BJ (cell line): ENCODE measurements at regions of chr7 and their contacts with region 1.

Region 1: DNA sequence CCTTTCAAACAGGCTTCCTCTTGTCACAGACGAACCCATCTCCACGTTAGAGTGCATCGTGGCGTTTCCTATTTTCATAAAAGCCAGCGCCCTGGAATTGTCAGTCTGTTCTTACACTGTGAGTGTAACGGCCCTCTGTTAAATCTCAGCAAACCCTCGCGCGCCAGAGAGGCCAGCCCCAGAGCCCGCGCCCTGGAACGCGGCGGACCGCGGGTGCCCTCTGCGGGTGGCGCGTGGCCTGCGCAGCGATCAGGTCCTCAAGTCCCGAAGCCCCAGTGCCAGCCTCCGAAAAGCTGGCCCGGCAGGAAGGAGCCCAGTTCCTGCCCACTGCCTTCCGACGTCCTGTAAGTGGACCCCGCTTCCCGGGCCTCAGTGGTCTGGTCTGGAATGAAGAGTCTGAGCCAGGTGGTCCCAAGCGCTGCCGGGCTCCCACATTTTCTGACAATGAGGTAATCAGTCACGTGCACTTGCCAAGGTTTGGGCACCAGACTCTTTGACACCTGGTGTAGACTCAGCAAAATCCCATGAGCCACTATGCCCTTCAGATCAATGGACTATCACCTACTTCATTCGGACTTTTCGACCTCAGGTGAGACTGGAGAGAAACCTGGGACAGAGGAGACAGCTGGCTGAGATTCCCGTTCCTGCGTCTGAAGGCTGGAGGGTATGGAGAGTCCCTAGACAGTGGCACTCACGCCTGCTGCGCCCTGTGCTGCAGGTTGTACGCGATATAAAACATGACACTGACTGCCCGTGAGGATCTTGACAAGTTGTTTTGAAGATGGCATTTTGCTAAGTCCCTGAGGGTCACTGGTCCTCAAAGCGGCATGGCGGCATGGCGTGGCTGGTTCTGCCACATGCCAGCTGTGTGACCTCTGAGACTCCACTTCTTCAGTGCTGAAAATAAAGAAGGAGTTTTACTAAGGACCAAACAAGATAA is 109.4 kb upstream of the LANCL2 start:
- DNase-seq: no peak
- H3K4me3 ChIP-seq: peak overlapping the region; percentile 52
- H3K27me3 ChIP-seq: no peaks in the 10 kb centered on the region
- CTCF ChIP-seq: peak; percentile 84

Region 2: GRCh38 chr7:53794816-53795215 is 1461.0 kb before region 1 on chr7:
- CTCF ChIA-PET with region 1: no interaction called
- POLR2A ChIA-PET with region 1: no interaction called
- DNase-seq: no peak
- H3K4me3 ChIP-seq: no peak overlapping the region
- H3K27me3 ChIP-seq: no peaks in the 10 kb centered on the region
- CTCF ChIP-seq: no peak

Region 3: GRCh38 chr7:54773472-54774399 is 482.0 kb before region 1 on chr7:
- CTCF ChIA-PET with region 1: interaction called, 398 read pairs
- POLR2A ChIA-PET with region 1: no interaction called
- DNase-seq: peak; percentile 26
- H3K4me3 ChIP-seq: peak overlapping the region; percentile 34
- H3K27me3 ChIP-seq: no peaks in the 10 kb centered on the region
- CTCF ChIP-seq: peak; percentile 83

Region 4: DNA sequence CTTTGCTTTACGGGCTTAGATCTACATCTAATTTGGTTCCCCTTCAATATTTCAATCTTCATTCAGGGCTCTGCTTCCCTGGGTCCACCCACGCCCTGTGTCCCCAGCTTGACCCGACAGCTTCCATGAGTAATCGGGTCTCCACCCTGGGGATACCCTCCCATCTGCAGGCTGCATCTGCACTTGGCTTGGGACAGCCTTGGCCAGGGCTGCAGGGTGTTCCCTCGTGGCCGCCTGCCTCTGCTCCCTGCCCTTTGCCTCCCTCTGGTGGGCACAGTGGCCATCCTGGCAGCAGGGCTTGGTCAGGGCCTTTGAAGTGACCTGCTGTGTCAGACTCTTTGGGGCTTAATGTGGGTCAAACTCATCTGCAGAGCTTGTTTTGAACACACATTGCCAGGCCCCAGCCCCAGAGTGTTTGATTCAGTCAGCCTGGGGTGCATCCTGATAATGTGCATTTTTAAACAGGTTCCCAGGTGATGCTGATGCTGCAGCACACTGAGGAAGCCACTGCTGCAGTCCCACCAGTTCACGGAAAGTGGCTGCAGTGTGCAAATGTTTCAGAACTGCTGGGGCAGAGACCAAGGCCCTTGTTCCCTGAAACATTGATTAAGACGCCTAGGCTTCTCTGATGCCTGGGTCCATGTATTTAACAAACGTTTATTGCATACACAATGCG is 416.1 kb before region 1 on chr7:
- CTCF ChIA-PET with region 1: interaction called, 29 read pairs
- POLR2A ChIA-PET with region 1: no interaction called
- DNase-seq: no peak
- H3K4me3 ChIP-seq: no peak overlapping the region
- H3K27me3 ChIP-seq: no peaks in the 10 kb centered on the region; the same call in 1 of the 2 replicates
- CTCF ChIP-seq: peak; percentile 81

Region 5: GRCh38 chr7:55018361-55019190 is 237.2 kb before region 1 on chr7 and contains the start of gene EGFR:
- CTCF ChIA-PET with region 1: interaction called, 54 read pairs
- POLR2A ChIA-PET with region 1: no interaction called
- DNase-seq: peak; percentile 24
- H3K4me3 ChIP-seq: peak within 1 kb of the TSS; percentile 87
- H3K27me3 ChIP-seq: no peaks in the 10 kb centered on the region
- CTCF ChIP-seq: no peak
- polyA plus RNA-seq, gene EGFR: 22.9 and 34.0 TPM in 2 replicates

Region 6: DNA sequence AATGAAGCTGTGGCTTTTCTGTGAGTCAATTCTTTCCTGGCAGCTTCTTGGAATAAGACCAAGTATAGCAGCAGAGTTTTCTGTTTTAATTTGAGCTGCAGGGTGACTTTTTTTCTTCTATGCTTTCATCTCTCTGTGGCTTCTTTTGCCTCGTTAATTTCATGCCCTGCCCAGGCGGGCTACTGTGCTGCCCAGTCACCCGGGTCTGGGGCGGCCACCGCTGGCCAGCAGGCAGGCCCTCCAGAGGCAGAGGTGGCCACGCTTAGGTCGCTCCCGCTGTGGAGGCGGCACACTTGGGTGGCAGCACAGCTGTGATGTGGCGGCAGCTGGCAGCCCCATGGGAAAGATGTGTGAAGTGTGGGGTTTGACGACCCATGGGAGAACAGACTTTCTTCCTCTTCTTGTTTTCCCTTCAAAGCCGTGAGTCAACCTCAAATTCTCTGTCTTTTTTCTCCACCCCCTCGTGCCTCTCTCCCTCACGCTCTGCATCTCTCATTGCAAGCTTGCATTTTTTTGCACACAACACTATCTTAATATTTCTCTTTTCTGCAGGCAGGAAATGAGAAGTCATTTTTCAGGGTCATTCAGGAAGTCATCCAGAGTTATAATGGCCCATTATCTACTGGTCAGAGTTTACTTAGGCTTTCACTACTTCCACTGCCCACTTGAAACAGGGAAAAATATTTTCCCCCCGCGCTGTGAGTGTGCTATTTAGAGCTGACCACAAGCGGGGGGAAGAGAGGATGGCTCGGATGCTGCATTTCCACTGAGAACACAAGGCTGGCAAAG is 169.2 kb before region 1 on chr7:
- CTCF ChIA-PET with region 1: interaction called, 10 read pairs
- POLR2A ChIA-PET with region 1: no interaction called
- DNase-seq: no peak
- H3K4me3 ChIP-seq: peak overlapping the region; percentile 32
- H3K27me3 ChIP-seq: no peaks in the 10 kb centered on the region
- CTCF ChIP-seq: no peak

Region 7: DNA sequence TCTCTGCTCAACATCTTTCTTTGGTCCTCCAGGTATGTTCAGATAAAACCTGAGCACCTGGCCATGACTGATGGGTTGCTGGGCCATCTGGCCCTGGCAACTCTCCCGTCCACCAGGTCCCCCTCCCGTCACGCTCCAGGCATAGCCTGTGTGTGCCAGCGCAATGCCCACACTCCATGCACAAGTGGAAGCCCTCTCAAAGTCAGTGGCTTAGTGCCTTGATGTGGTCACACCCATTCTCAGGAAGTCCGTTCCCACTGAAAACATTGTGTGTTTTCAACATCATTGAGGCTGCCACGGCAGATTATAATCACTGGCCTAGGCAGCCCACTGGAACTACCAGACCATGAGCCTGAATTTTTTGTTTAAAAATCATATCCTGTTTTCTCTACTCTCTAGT is 61.2 kb before region 1 on chr7:
- CTCF ChIA-PET with region 1: interaction called, 12 read pairs
- POLR2A ChIA-PET with region 1: no interaction called
- DNase-seq: no peak
- H3K4me3 ChIP-seq: no peak overlapping the region
- H3K27me3 ChIP-seq: no peaks in the 10 kb centered on the region
- CTCF ChIP-seq: no peak

Region 8: DNA sequence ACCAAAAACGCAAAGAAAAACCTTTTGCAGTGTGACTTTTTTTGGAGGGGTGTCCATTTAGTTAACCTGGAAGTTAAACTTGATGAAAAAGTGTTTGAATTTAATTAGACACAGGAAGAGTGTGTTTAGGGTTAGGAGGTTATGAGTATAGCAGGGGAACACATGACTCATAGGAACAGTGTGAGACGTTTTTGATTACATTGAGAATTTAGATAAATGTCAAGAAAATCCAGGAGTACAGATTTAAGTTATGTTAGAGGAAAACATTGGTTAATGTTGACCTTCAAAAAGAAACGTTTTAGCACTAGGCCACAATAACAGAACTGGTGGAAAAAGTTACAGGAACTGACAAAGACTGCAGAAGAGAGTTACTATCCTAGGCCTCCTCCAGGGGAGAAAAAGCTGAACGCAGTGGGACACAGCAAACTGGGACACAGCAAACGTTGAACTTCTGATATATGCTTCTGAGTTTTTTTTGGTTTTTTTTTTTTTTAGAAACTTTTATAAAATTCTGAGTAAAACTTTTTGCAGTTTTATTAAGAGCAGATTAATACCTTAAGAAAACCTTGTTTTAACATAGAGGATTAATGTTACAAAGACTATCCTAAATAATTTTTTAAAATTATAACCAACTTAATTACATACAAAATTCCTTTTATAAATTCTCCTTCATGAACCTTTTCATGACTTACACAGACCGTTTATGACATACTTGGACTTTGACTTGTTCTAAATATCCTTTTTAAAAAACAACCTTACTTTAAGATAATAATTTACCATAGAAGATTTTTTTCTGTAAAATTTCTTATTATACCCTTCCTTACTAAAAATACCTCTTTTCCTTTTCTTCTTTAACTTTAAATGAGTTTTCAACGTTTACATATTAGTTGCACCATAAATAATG is 131.5 kb after region 1 on chr7:
- CTCF ChIA-PET with region 1: no interaction called
- POLR2A ChIA-PET with region 1: no interaction called
- DNase-seq: no peak
- H3K4me3 ChIP-seq: no peak overlapping the region
- H3K27me3 ChIP-seq: no peaks in the 10 kb centered on the region
- CTCF ChIP-seq: no peak